ENCODE measurements at regions of chr2 and their contacts with region 1.

Region 1: GRCh38 chr2:189232759-189233406 is 53.3 kb upstream of the COL5A2 start:
- DNase-seq: no peak
- H3K4me3 Mint-ChIP-seq: no peak overlapping the region
- H3K27ac Mint-ChIP-seq: peak overlapping the region; percentile 63
- H3K4me1 Mint-ChIP-seq: peaks cover 18% of the 10 kb centered on the region
- H3K27me3 Mint-ChIP-seq: no peaks in the 10 kb centered on the region
- CTCF ChIP-seq: no peak

Region 2: DNA sequence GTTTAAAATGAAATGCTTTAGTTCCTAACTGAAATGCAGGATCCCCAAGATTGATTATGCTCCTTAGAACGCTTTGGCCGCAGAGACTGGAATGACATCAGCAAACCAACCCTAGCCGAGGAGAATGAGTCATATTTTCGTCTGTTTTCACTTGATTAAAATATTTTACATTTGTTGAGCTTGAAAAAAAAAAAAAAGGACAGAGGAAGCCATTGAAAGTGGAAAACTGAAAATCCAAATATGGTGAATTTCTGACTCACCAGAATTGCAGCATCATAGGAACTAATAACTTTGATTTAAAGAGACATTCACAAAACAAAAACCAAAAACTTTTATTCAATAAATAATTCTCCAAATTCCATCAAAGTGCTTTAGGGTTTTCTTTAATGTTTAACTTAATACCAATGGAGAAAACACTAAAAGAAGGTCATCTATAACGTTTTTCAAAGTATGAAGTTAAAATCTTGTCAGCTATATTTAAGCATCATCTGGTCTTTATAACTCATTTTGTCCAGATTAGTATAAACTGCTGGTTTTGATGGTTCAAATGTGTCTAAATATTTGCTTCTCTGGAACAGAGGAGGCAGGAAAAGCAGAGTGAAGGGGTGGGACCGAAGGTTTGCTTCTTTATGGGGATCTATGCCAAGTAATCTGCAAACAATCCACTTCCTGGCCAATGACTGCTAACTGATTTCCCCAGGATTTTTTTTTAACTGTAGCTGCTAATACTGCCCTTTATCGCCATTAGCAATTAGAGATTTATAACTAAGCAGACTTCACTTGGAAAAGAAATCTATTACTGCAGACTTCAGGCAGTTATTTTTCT is 22.4 kb before region 1 on chr2:
- CTCF ChIA-PET with region 1: interaction called, 3 read pairs
- POLR2A ChIA-PET with region 1: interaction called, 16 read pairs
- intact Hi-C with region 1: no loop called
- DNase-seq: peak; percentile 81
- H3K4me3 Mint-ChIP-seq: peak overlapping the region; percentile 8
- H3K27ac Mint-ChIP-seq: peak overlapping the region; percentile 94
- H3K4me1 Mint-ChIP-seq: peaks cover 16% of the 10 kb centered on the region
- H3K27me3 Mint-ChIP-seq: no peaks in the 10 kb centered on the region
- CTCF ChIP-seq: no peak

Region 3: GRCh38 chr2:189221853-189222772 is 10.8 kb before region 1 on chr2:
- CTCF ChIA-PET with region 1: interaction called, 4 read pairs
- POLR2A ChIA-PET with region 1: interaction called, 16 read pairs
- intact Hi-C with region 1: no loop called
- DNase-seq: peak; percentile 63
- H3K4me3 Mint-ChIP-seq: peak overlapping the region; percentile 31
- H3K27ac Mint-ChIP-seq: peak overlapping the region; percentile 96
- H3K4me1 Mint-ChIP-seq: peaks cover 29% of the 10 kb centered on the region
- H3K27me3 Mint-ChIP-seq: no peaks in the 10 kb centered on the region
- CTCF ChIP-seq: no peak

Region 4: DNA sequence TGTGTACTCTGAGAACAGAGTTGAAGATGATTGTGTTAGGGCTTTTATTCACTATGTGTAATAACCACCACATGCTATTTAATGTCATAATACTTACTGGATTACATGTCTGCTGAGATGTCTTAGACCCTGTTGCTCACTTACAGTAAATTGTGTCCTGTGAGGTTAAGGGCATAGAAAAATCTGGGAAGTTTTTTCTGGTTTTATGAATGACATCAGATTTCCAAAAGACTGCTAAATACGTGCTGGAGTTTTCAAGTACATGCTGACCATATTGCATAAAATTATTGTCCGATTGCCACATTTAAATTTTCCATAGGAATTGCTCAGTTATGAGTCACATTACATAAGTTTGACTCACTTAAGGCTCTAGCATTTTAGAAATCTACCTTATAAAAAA is 43.4 kb after region 1 on chr2:
- CTCF ChIA-PET with region 1: no interaction called
- POLR2A ChIA-PET with region 1: interaction called, 6 read pairs
- intact Hi-C with region 1: loop called (anchors 2 kb)
- DNase-seq: peak; percentile 88
- H3K4me3 Mint-ChIP-seq: peak overlapping the region; percentile 55
- H3K27ac Mint-ChIP-seq: peak overlapping the region; percentile 90
- H3K4me1 Mint-ChIP-seq: peaks cover 9% of the 10 kb centered on the region
- H3K27me3 Mint-ChIP-seq: no peaks in the 10 kb centered on the region
- CTCF ChIP-seq: no peak